PC-9 (cell line): ENCODE measurements at regions of chr3 and their contacts with region 1.

Region 1: DNA sequence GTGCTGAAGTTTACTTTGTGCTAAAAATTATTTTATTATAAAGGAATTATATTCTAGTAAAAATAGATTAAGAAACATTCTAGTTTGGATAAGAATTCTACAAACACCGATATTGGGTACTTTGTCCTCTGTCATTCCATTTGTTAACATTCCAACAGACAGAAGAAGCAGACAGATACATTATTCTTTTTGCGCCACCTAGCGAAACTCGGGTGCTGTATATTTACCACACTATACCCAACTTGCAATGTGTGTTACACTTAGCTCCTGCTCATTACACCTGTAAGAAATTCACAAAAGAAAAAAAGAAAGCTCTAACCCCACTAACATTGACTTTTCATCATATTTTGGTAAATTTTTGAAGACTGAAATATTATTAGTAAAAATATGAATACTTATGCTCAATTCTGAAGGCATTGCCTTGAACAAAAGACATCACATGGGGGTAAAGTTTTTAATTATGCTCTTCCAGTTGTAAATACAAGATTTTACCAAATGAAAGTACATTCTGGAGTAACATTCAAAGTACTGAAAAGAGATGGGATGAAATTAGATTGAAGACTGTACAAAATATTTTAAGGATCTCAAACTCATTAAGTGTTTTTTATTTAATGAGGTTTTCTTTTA is 136.5 kb upstream of the MLF1 start:
- DNase-seq: peak; percentile 37 to 42
- H3K4me3 ChIP-seq: no peak overlapping the region
- H3K27ac ChIP-seq: no peak overlapping the region
- H3K4me1 ChIP-seq: no peaks in the 10 kb centered on the region
- H3K27me3 ChIP-seq: no peaks in the 10 kb centered on the region
- CTCF ChIP-seq: peak; percentile 87

Region 2: GRCh38 chr3:157532529-157533297 is 901.8 kb before region 1 on chr3:
- CTCF ChIA-PET with region 1: no interaction called
- POLR2A ChIA-PET with region 1: no interaction called
- intact Hi-C with region 1: loop called (anchors 2 kb)
- DNase-seq: peak; percentile 37 to 80
- H3K4me3 ChIP-seq: no peak overlapping the region
- H3K27ac ChIP-seq: no peak overlapping the region
- H3K4me1 ChIP-seq: peaks cover 6% of the 10 kb centered on the region
- H3K27me3 ChIP-seq: no peaks in the 10 kb centered on the region
- CTCF ChIP-seq: peak; percentile 95

Region 3: GRCh38 chr3:157606011-157606851 is 828.3 kb before region 1 on chr3:
- CTCF ChIA-PET with region 1: interaction called, 4 read pairs
- POLR2A ChIA-PET with region 1: no interaction called
- intact Hi-C with region 1: loop called (anchors 2 kb)
- DNase-seq: peak; percentile 45 to 68
- H3K4me3 ChIP-seq: no peak overlapping the region
- H3K27ac ChIP-seq: no peak overlapping the region
- H3K4me1 ChIP-seq: no peaks in the 10 kb centered on the region
- H3K27me3 ChIP-seq: no peaks in the 10 kb centered on the region
- CTCF ChIP-seq: peak; percentile 91

Region 4: GRCh38 chr3:157767602-157768001 is 666.9 kb before region 1 on chr3:
- CTCF ChIA-PET with region 1: no interaction called
- POLR2A ChIA-PET with region 1: no interaction called
- intact Hi-C with region 1: loop called (anchors 10 kb)
- DNase-seq: peak in 1 of 2 experiments; percentile 51
- H3K4me3 ChIP-seq: no peak overlapping the region
- H3K27ac ChIP-seq: no peak overlapping the region
- H3K4me1 ChIP-seq: no peaks in the 10 kb centered on the region
- H3K27me3 ChIP-seq: no peaks in the 10 kb centered on the region
- CTCF ChIP-seq: peak; percentile 38; the same call in 1 of the 2 replicates

Region 5: GRCh38 chr3:157865352-157866000 is 569.0 kb before region 1 on chr3:
- CTCF ChIA-PET with region 1: no interaction called
- POLR2A ChIA-PET with region 1: no interaction called
- intact Hi-C with region 1: loop called (anchors 5 kb)
- DNase-seq: peak in 1 of 2 experiments; percentile 24
- H3K4me3 ChIP-seq: no peak overlapping the region
- H3K27ac ChIP-seq: no peak overlapping the region
- H3K4me1 ChIP-seq: no peaks in the 10 kb centered on the region
- H3K27me3 ChIP-seq: no peaks in the 10 kb centered on the region
- CTCF ChIP-seq: peak; percentile 78

Region 6: DNA sequence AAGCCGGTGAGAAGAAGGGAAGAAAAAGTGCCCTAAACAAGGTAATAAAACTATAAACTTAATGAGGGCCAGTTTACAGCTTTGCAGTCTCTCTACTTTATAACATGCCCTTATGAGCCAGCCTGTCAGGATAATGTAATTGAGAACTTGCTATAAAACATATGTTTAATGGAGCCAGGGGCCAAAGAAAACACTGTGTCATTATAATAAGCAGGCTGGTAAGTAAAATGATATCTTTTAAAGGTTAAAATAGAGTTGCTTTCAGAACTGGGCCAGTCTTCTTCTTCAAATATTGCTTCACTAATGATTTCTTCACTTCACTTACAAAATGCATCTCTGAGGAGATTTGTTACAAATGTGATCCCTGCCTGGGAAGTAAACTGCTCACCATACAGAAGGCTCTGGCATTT is 520.8 kb before region 1 on chr3:
- CTCF ChIA-PET with region 1: no interaction called
- POLR2A ChIA-PET with region 1: no interaction called
- intact Hi-C with region 1: loop called (anchors 10 kb)
- DNase-seq: no peak
- H3K4me3 ChIP-seq: no peak overlapping the region
- H3K27ac ChIP-seq: no peak overlapping the region
- H3K4me1 ChIP-seq: no peaks in the 10 kb centered on the region
- H3K27me3 ChIP-seq: no peaks in the 10 kb centered on the region
- CTCF ChIP-seq: no peak

Region 7: GRCh38 chr3:158313338-158313927 is 121.1 kb before region 1 on chr3:
- CTCF ChIA-PET with region 1: no interaction called
- POLR2A ChIA-PET with region 1: no interaction called
- intact Hi-C with region 1: loop called (anchors 5 kb)
- DNase-seq: no peak
- H3K4me3 ChIP-seq: no peak overlapping the region
- H3K27ac ChIP-seq: no peak overlapping the region
- H3K4me1 ChIP-seq: no peaks in the 10 kb centered on the region
- H3K27me3 ChIP-seq: no peaks in the 10 kb centered on the region
- CTCF ChIP-seq: peak; percentile 79